ENCODE measurements at regions of chr10 and their contacts with region 1.

Region 1: GRCh38 chr10:72337020-72337629 is 17.6 kb downstream of the DNAJB12 start:
- DNase-seq: peak; percentile 34 to 77 (median 56)
- ATAC-seq: peak; percentile 25
- H3K4me3 ChIP-seq: no peak overlapping the region
- H3K4me3 Mint-ChIP-seq: peak overlapping the region in 4 of 10 donors; percentile 12 to 93 (median 30)
- H3K27ac ChIP-seq: peak overlapping the region; percentile 79
- H3K27ac Mint-ChIP-seq: peak overlapping the region; percentile 29 to 99 (median 92)
- H3K4me1 ChIP-seq: peaks cover 52 to 58% of the 10 kb centered on the region in 2 donors
- H3K4me1 Mint-ChIP-seq: peaks cover 31 to 66% (median 55%) of the 10 kb centered on the region in 7 donors
- H3K27me3 ChIP-seq: no peaks in the 10 kb centered on the region
- H3K27me3 Mint-ChIP-seq: no peaks in the 10 kb centered on the region

Region 2: DNA sequence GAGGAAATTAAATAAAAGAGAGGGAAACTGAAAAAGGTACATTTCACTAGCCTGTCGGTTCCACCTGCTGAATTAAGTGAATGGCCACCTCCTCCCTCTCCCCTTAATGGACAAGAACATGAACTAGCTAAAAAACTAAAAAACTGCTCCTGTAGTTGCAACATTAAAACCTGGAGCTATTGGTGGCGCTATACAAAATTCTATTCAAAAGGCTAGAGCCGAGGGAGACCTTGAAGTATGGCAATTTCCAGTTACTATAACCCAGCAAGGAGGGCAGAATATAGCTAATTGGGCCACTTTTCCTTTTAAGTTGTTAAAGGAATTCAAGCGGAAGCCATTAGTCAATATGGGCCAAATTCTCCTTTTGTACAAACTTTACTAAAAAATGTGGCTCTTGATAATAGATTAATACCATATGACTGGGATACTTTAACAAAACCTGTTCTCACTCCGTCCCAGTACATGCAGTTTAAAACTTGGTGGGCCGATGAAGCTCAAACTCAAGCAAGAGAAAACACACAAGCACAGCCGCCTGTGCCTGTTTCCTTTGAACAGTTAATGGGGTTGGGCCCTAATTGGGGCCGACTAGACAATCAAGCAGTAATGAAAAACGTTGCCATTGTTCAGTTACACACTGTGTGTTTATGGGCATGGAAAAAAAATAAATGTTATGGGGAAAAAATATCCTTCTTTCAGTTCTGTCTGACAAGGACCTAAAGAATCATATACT is 379.4 kb before region 1 on chr10:
- CTCF ChIA-PET with region 1: no interaction called
- POLR2A ChIA-PET with region 1: no interaction called
- intact Hi-C with region 1: loop called in 1 of 2 experiments (anchors 1 kb)
- DNase-seq: no peak
- ATAC-seq: no peak
- H3K4me3 ChIP-seq: no peak overlapping the region
- H3K4me3 Mint-ChIP-seq: no peak overlapping the region
- H3K27ac ChIP-seq: no peak overlapping the region
- H3K27ac Mint-ChIP-seq: no peak overlapping the region
- H3K4me1 ChIP-seq: no peaks in the 10 kb centered on the region
- H3K4me1 Mint-ChIP-seq: peaks cover 0 to 3% (median 0%) of the 10 kb centered on the region in 7 donors
- H3K27me3 ChIP-seq: no peaks in the 10 kb centered on the region
- H3K27me3 Mint-ChIP-seq: peaks cover 11 to 49% (median 13%) of the 10 kb centered on the region in 5 donors

Region 3: GRCh38 chr10:72414642-72415041 is 77.5 kb after region 1 on chr10:
- CTCF ChIA-PET with region 1: no interaction called
- POLR2A ChIA-PET with region 1: no interaction called
- intact Hi-C with region 1: no loop called
- DNase-seq: no peak
- ATAC-seq: no peak
- H3K4me3 ChIP-seq: no peak overlapping the region
- H3K4me3 Mint-ChIP-seq: no peak overlapping the region
- H3K27ac ChIP-seq: no peak overlapping the region
- H3K27ac Mint-ChIP-seq: no peak overlapping the region
- H3K4me1 ChIP-seq: no peaks in the 10 kb centered on the region
- H3K4me1 Mint-ChIP-seq: no peaks in the 10 kb centered on the region
- H3K27me3 ChIP-seq: no peaks in the 10 kb centered on the region
- H3K27me3 Mint-ChIP-seq: no peaks in the 10 kb centered on the region

Region 4: GRCh38 chr10:72858067-72858466 is 520.9 kb after region 1 on chr10:
- CTCF ChIA-PET with region 1: no interaction called
- POLR2A ChIA-PET with region 1: no interaction called
- intact Hi-C with region 1: no loop called
- DNase-seq: no peak
- ATAC-seq: no peak
- H3K4me3 ChIP-seq: no peak overlapping the region
- H3K4me3 Mint-ChIP-seq: no peak overlapping the region
- H3K27ac ChIP-seq: no peak overlapping the region
- H3K27ac Mint-ChIP-seq: no peak overlapping the region
- H3K4me1 ChIP-seq: no peaks in the 10 kb centered on the region
- H3K4me1 Mint-ChIP-seq: no peaks in the 10 kb centered on the region
- H3K27me3 ChIP-seq: no peaks in the 10 kb centered on the region
- H3K27me3 Mint-ChIP-seq: no peaks in the 10 kb centered on the region

Measured in naive thymus-derived CD4-positive, alpha-beta T cell (primary cell).